ENCODE measurements at regions of chr1 and their contacts with region 1.

Region 1: GRCh38 chr1:183471743-183472487 is 384 bp upstream of the SMG7 start:
- DNase-seq: peak; percentile 90 to 99 (median 96)
- ATAC-seq: peak; percentile 82
- H3K4me3 ChIP-seq: peak overlapping the region; percentile 74
- H3K4me3 Mint-ChIP-seq: peak overlapping the region; percentile 94 to 100 (median 98)
- H3K27ac ChIP-seq: peak overlapping the region; percentile 90
- H3K27ac Mint-ChIP-seq: peak overlapping the region in 8 of 9 donors; percentile 97 to 100 (median 99)
- H3K4me1 ChIP-seq: peaks cover 17 to 34% of the 10 kb centered on the region in 2 donors
- H3K4me1 Mint-ChIP-seq: peaks cover 3 to 32% (median 14%) of the 10 kb centered on the region in 7 donors
- H3K27me3 ChIP-seq: no peaks in the 10 kb centered on the region
- H3K27me3 Mint-ChIP-seq: peaks cover 0 to 7% (median 0%) of the 10 kb centered on the region in 5 donors

Region 2: GRCh38 chr1:182588500-182589452 is 883.1 kb before region 1 on chr1 and contains the start of gene RNASEL:
- CTCF ChIA-PET with region 1: no interaction called
- POLR2A ChIA-PET with region 1: no interaction called
- intact Hi-C with region 1: loop called in 1 of 2 experiments (anchors 1 kb)
- DNase-seq: peak; percentile 24 to 72 (median 65)
- ATAC-seq: peak; percentile 89
- H3K4me3 ChIP-seq: peak within 1 kb of the TSS; percentile 92
- H3K4me3 Mint-ChIP-seq: peak within 1 kb of the TSS; percentile 93 to 99 (median 98)
- H3K27ac ChIP-seq: peak within 1 kb of the TSS; percentile 97
- H3K27ac Mint-ChIP-seq: peak within 1 kb of the TSS; percentile 97 to 100 (median 99)
- H3K4me1 ChIP-seq: peaks cover 23 to 27% of the 10 kb centered on the region in 2 donors
- H3K4me1 Mint-ChIP-seq: peaks cover 31 to 60% (median 51%) of the 10 kb centered on the region in 7 donors
- H3K27me3 ChIP-seq: no peaks in the 10 kb centered on the region
- H3K27me3 Mint-ChIP-seq: peaks cover 0 to 9% (median 0%) of the 10 kb centered on the region in 5 donors
- total RNA-seq, gene RNASEL: 5.7 to 34.9 (median 12.1) TPM

Region 3: DNA sequence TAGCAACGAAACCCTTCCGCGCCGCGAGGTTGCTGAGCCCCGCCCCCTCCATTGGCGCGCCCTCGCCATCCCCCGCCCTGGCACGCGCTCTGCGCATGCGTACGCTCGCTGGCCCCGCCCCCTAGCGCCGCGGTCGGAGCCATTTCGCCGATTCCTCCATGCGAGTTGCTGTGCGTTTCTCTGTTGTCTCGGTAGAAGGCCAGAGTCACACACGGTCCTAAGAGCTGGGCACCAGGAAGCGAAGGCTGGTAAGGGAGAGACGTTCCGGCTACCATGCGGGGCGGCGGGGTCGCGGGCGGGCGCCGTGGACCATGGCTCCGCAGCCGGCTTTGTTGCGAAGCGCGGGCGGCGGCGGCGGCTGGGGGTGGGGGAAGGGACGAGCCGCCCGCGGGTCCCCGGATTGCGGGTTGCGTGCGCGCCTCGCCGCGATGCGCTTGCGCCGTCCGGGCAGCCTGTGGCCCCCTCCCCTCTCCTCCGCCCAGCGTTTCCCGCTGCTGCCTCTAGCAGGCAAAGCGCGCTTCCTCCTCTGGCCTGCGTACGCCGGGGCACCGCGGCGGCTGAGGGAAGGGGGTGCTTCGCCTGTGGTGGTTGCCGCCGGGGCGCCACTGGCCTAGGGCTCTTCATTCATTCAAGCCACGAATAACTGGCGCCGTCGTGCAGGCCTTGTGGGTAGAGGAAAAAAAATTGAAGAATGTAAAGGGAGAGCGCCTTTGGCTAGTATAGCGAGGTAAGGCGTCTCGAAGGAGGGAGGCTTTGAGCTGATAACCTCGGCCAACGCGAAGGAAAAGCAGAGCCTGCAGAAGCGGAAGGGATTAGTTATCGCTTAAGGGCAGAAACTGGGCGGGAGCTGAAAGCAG is 632.5 kb before region 1 on chr1 and contains the start of gene DHX9:
- CTCF ChIA-PET with region 1: no interaction called
- POLR2A ChIA-PET with region 1: no interaction called
- intact Hi-C with region 1: loop called in 1 of 2 experiments (anchors 1 kb)
- DNase-seq: peak; percentile 93 to 100 (median 97)
- ATAC-seq: peak; percentile 89
- H3K4me3 ChIP-seq: peak within 1 kb of the TSS; percentile 99
- H3K4me3 Mint-ChIP-seq: peak within 1 kb of the TSS; percentile 91 to 100 (median 98)
- H3K27ac ChIP-seq: peak within 1 kb of the TSS; percentile 84
- H3K27ac Mint-ChIP-seq: peak within 1 kb of the TSS; percentile 92 to 100 (median 98)
- H3K4me1 ChIP-seq: peaks cover 22 to 33% of the 10 kb centered on the region in 2 donors
- H3K4me1 Mint-ChIP-seq: peaks cover 36 to 61% (median 54%) of the 10 kb centered on the region in 7 donors
- H3K27me3 ChIP-seq: no peaks in the 10 kb centered on the region
- H3K27me3 Mint-ChIP-seq: peaks cover 0 to 9% (median 0%) of the 10 kb centered on the region in 5 donors
- total RNA-seq, gene DHX9: 207 to 299 (median 227) TPM

Region 4: DNA sequence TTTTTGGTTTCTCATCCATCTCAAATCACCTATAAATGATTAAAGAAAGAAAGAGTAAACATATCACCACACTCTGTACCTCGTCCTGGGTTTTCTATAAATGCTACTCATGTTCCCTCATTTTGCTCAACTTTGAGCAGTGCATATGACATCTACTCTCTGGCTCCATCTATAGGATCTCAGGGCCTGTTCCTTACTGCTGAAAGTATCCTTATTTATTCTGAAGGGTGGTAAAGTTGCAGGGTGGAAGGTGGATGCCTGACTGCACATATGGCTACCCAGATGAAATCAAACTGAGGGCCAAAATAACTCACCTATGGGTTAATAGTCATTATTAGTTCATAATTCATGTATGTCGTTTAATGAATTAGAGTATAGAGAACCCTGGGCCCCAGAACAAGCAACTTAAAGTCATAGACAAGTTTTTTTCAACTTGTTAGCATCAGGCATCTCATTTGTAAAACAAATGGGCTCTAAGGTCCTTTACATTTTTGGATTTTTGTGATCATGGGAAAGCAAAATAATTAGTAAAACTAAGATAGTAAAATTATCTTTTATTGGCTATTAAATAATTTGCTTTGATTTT is 71.8 kb after region 1 on chr1:
- CTCF ChIA-PET with region 1: interaction called, 16 read pairs
- POLR2A ChIA-PET with region 1: interaction called, 5 read pairs
- intact Hi-C with region 1: loop called (anchors 1 kb)
- DNase-seq: peak in 7 of 9 donors; percentile 34 to 61 (median 48)
- ATAC-seq: peak; percentile 91
- H3K4me3 ChIP-seq: no peak overlapping the region
- H3K4me3 Mint-ChIP-seq: no peak overlapping the region
- H3K27ac ChIP-seq: no peak overlapping the region
- H3K27ac Mint-ChIP-seq: peak overlapping the region in 6 of 9 donors; percentile 1 to 50 (median 4)
- H3K4me1 ChIP-seq: no peaks in the 10 kb centered on the region
- H3K4me1 Mint-ChIP-seq: peaks cover 4 to 13% (median 10%) of the 10 kb centered on the region in 7 donors
- H3K27me3 ChIP-seq: no peaks in the 10 kb centered on the region
- H3K27me3 Mint-ChIP-seq: no peaks in the 10 kb centered on the region

Region 5: DNA sequence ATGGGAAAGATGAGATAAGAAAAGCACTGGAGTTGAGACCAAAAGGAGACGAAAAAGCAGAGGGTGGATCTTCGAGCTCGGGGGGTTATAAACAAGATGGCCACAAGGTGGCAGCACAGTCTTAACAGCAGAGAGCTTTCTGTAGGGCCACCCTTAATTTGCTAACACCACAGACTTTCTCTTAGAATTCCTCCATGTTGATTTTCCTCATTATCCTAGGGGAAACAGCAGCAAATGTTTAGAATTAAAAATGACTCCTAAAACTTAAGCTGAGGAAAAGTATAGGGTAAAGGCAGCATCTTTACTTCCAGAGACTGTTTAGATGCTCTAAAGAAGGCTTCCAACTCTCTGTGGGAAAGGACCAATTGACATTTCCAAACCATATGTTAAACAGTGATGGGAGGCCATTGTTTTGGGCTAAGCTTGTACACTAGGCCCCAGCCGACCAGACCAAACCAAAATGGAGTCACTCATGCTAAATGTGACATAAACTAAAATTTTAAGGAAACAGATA is 183.7 kb after region 1 on chr1:
- CTCF ChIA-PET with region 1: interaction called, 3 read pairs
- POLR2A ChIA-PET with region 1: no interaction called
- intact Hi-C with region 1: loop called in 1 of 2 experiments (anchors 1 kb)
- DNase-seq: peak; percentile 43 to 74 (median 65)
- ATAC-seq: peak; percentile 88
- H3K4me3 ChIP-seq: no peak overlapping the region
- H3K4me3 Mint-ChIP-seq: no peak overlapping the region
- H3K27ac ChIP-seq: no peak overlapping the region
- H3K27ac Mint-ChIP-seq: peak overlapping the region in 3 of 9 donors; percentile 4 to 60 (median 19)
- H3K4me1 ChIP-seq: peaks cover 18 to 34% of the 10 kb centered on the region in 2 donors
- H3K4me1 Mint-ChIP-seq: peaks cover 22 to 48% (median 36%) of the 10 kb centered on the region in 7 donors
- H3K27me3 ChIP-seq: no peaks in the 10 kb centered on the region
- H3K27me3 Mint-ChIP-seq: peaks cover 0 to 5% (median 0%) of the 10 kb centered on the region in 5 donors

Region 6: DNA sequence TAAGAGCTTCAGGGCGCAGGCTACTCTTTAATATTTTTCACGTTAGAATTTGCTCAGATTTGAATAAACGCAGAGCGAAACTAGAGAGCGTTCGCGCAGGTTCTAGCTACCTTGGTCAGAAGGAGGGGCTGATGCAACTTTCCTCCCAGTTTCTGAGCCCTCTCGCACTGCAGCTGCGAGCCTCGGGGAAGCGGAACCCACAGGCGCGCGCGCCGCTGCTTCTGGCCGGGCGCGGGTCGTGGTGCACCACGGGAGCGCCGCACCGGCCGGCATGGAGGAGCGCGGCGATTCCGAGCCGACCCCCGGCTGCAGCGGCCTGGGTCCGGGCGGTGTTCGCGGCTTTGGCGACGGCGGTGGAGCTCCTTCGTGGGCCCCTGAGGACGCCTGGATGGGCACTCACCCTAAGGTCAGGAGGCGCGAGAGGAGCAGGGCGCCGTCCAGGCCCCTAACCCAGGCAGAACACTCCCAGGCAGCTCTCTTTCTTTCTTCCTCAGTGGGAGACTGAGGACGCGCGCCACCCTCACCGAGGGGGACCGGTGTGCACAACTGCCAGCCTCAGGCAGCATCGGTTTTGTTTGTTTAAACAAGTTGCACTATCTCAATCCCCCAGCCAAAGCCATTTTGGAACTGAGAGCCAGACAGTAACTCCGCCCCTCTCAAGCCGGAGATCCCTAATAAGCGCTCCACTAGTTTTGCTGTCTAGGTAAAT is 579.7 kb after region 1 on chr1 and contains the start of gene TSEN15:
- CTCF ChIA-PET with region 1: no interaction called
- POLR2A ChIA-PET with region 1: no interaction called
- intact Hi-C with region 1: loop called (anchors 1 to 5 kb)
- DNase-seq: peak; percentile 54 to 75 (median 68)
- ATAC-seq: peak; percentile 98
- H3K4me3 ChIP-seq: peak within 1 kb of the TSS; percentile 87
- H3K4me3 Mint-ChIP-seq: peak within 1 kb of the TSS; percentile 91 to 99 (median 98)
- H3K27ac ChIP-seq: peak within 1 kb of the TSS; percentile 77
- H3K27ac Mint-ChIP-seq: peak within 1 kb of the TSS; percentile 89 to 99 (median 95)
- H3K4me1 ChIP-seq: peaks cover 19 to 23% of the 10 kb centered on the region in 2 donors
- H3K4me1 Mint-ChIP-seq: peaks cover 18 to 56% (median 45%) of the 10 kb centered on the region in 7 donors
- H3K27me3 ChIP-seq: peaks cover 0 to 3% of the 10 kb centered on the region in 2 donors
- H3K27me3 Mint-ChIP-seq: peaks cover 13 to 33% (median 20%) of the 10 kb centered on the region in 5 donors
- total RNA-seq, gene TSEN15: 12.7 to 48.9 (median 31.1) TPM

Measured in naive thymus-derived CD4-positive, alpha-beta T cell (primary cell).